ENCODE measurements at regions of chr4 and their contacts with region 1.

Region 1: GRCh38 chr4:3062471-3062870 is 11.9 kb downstream of the HTT-AS start:
- DNase-seq: no peak
- ATAC-seq: no peak
- H3K4me3 ChIP-seq: no peak overlapping the region
- H3K27ac ChIP-seq: no peak overlapping the region
- H3K4me1 ChIP-seq: no peaks in the 10 kb centered on the region
- CTCF ChIP-seq: no peak
- EP300 ChIP-seq: no peak
- POLR2A ChIP-seq: no peak
- RAD21 ChIP-seq: no peak

Region 2: GRCh38 chr4:3047464-3048286 is 14.8 kb before region 1 on chr4:
- CTCF ChIA-PET with region 1: interaction called, 10 read pairs
- POLR2A ChIA-PET with region 1: no interaction called
- DNase-seq: peak; percentile 16 to 58
- ATAC-seq: peak; percentile 78 to 91
- H3K4me3 ChIP-seq: peak overlapping the region; percentile 34
- H3K27ac ChIP-seq: no peak overlapping the region
- H3K4me1 ChIP-seq: no peaks in the 10 kb centered on the region
- CTCF ChIP-seq: peak; percentile 55
- EP300 ChIP-seq: no peak
- POLR2A ChIP-seq: no peak
- RAD21 ChIP-seq: peak; percentile 57 to 61

Measured in A549 (cell line).